ENCODE measurements at regions of chr6 and their contacts with region 1.

Region 1: GRCh38 chr6:73180763-73181619 is 44.3 kb downstream of the KHDC1L start:
- DNase-seq: no peak
- ATAC-seq: peak; percentile 93
- H3K4me3 Mint-ChIP-seq: peak overlapping the region; percentile 69
- H3K27ac Mint-ChIP-seq: peak overlapping the region; percentile 33
- H3K4me1 Mint-ChIP-seq: peaks cover 14% of the 10 kb centered on the region
- H3K27me3 Mint-ChIP-seq: no peaks in the 10 kb centered on the region
- CTCF ChIP-seq: peak; percentile 34

Region 2: GRCh38 chr6:71383901-71384489 is 1797.0 kb before region 1 on chr6:
- CTCF ChIA-PET with region 1: no interaction called
- POLR2A ChIA-PET with region 1: no interaction called
- intact Hi-C with region 1: loop called (anchors 1 kb)
- DNase-seq: no peak
- ATAC-seq: no peak
- H3K4me3 Mint-ChIP-seq: no peak overlapping the region
- H3K27ac Mint-ChIP-seq: no peak overlapping the region
- H3K4me1 Mint-ChIP-seq: peaks cover 3% of the 10 kb centered on the region
- H3K27me3 Mint-ChIP-seq: no peaks in the 10 kb centered on the region
- CTCF ChIP-seq: no peak

Region 3: DNA sequence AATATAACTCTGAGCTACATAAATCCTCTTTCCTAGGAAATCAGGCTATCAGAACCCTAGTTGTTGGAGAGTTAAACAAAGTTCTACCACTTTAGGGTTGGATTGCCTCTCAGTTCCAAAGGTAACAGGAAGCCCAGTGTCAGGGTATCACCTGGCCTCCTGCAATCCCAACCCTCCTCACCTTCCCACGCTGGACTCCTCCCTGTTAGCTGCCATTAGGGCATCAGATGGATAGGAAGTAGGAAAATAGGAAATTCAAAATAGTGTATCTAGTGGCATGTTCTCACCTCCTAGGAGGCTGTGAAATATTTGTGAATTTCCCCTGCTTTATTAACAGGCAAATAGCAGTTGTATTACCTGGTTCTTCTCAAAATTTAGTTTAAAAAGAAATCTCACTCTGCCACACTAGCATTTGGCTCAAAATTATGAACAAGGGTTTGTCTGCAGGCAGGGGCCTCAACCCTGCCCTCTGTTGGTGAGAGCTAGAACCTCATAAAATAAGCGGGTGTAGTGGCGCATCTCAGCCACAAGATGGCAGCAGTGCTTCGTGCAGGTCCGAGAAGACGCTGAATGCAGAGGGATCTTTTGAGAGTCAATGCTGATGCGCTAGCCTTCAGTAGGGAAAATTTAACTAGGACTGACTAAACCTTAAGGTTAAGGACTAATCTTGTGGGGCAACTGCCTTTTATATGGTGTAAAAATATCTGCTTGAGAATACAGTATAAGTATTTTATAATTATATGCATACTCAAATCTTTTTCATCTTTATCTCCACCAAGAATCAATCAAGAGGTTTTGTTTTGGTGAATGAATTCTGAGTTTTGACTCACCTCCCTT is 768.9 kb before region 1 on chr6:
- CTCF ChIA-PET with region 1: interaction called, 6 read pairs
- POLR2A ChIA-PET with region 1: no interaction called
- intact Hi-C with region 1: loop called (anchors 1 kb)
- DNase-seq: peak; percentile 67
- ATAC-seq: peak; percentile 99
- H3K4me3 Mint-ChIP-seq: no peak overlapping the region
- H3K27ac Mint-ChIP-seq: no peak overlapping the region
- H3K4me1 Mint-ChIP-seq: peaks cover 5% of the 10 kb centered on the region
- H3K27me3 Mint-ChIP-seq: peaks cover 20% of the 10 kb centered on the region
- CTCF ChIP-seq: peak; percentile 100

Region 4: GRCh38 chr6:72616406-72617015 is 564.5 kb before region 1 on chr6:
- CTCF ChIA-PET with region 1: interaction called, 27 read pairs
- POLR2A ChIA-PET with region 1: interaction called, 7 read pairs
- intact Hi-C with region 1: loop called (anchors 1 kb)
- DNase-seq: no peak
- ATAC-seq: no peak
- H3K4me3 Mint-ChIP-seq: no peak overlapping the region
- H3K27ac Mint-ChIP-seq: no peak overlapping the region
- H3K4me1 Mint-ChIP-seq: peaks cover 28% of the 10 kb centered on the region
- H3K27me3 Mint-ChIP-seq: no peaks in the 10 kb centered on the region
- CTCF ChIP-seq: no peak

Region 5: DNA sequence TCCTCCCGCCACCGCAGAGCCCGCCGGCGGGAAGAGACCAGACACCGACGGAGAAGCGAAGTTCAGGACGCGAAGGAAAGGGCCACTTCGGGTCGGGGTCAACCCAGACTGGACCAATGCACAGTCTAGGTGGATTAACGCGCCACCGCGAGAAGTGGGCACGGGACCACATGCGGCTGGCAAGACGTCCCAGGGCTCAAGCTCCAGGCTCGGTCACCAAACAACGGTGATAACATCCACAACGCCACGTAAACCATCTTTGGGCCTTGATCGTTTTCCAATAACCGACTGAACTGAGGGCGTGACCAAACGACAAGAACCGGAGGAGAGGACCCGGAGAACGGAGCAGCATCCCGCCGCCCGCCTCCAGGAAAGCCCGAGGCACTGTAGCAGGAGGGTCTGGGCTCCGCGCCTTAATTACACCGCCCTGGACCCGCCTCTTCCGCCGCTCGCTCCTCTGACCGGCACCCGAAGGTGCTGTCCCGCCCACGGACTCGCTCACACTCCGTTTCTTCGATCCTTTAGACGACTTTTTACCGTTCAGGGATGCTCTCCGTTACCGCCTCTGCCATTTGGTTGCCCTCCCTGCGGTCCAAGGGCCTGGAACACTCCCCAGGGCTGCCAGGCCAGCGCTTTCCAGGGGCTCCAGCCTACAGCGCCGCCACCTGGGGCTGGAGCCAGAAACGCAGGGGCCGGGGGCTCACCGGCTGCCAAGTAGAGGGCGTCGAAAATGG is 128.9 kb after region 1 on chr6:
- CTCF ChIA-PET with region 1: no interaction called
- POLR2A ChIA-PET with region 1: no interaction called
- intact Hi-C with region 1: loop called (anchors 5 kb)
- DNase-seq: peak; percentile 59
- ATAC-seq: peak; percentile 94
- H3K4me3 Mint-ChIP-seq: peak overlapping the region; percentile 97
- H3K27ac Mint-ChIP-seq: peak overlapping the region; percentile 87
- H3K4me1 Mint-ChIP-seq: peaks cover 18% of the 10 kb centered on the region
- H3K27me3 Mint-ChIP-seq: peaks cover 8% of the 10 kb centered on the region
- CTCF ChIP-seq: no peak